Left ventricle myocardium inferior (tissue), 1 donor: ENCODE measurements at regions of chr10 and their contacts with region 1.

Region 1: GRCh38 chr10:48656241-48656913 is 28.3 kb upstream of the WDFY4 start:
- DNase-seq: peak; percentile 94
- H3K4me3 ChIP-seq: peak overlapping the region; percentile 81
- H3K27ac ChIP-seq: peak overlapping the region; percentile 80
- H3K4me1 ChIP-seq: peaks cover 16% of the 10 kb centered on the region
- H3K27me3 ChIP-seq: no peaks in the 10 kb centered on the region
- CTCF ChIP-seq: peak; percentile 96

Region 2: DNA sequence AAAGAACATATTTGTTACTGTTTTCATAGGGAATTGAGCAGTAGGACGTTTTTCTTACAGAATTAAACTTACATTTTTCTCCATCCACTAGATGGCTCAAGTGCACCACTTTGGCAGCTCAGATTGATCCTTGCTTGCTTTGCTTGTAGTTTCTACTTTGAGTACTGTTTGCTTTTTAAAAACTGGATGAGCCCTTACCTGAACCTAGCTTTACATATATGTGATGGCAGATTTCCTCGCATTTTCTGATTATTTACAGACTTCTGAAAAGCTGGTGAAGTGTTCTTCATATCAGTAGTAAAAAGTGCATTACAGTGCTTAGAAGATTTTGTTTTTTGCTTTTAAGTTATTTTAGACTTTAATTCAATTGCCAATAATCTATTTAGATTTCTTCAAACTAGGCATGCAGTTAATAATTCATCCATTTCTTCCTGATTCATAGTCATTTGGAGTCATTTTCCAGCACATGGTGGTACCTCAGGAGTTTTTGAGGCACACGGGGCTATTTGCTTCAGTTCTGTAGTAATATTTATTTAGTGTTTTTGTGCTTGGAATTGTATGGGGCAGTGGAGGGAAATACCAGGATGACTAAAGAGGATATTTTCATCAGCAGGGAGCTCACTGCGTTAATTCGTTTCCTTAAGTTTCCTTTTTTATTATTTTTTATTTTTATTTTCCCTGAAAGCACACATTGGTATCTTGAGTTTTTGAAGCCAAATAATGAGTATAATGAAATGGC is 292.6 kb before region 1 on chr10:
- intact Hi-C with region 1: loop called (anchors 5 kb)
- DNase-seq: no peak
- H3K4me3 ChIP-seq: no peak overlapping the region
- H3K27ac ChIP-seq: peak overlapping the region; percentile 36
- H3K4me1 ChIP-seq: peaks cover 58% of the 10 kb centered on the region
- H3K27me3 ChIP-seq: no peaks in the 10 kb centered on the region
- CTCF ChIP-seq: peak; percentile 82

Region 3: GRCh38 chr10:48551861-48552591 is 104.4 kb before region 1 on chr10:
- intact Hi-C with region 1: loop called (anchors 2 kb)
- DNase-seq: peak; percentile 38
- H3K4me3 ChIP-seq: no peak overlapping the region
- H3K27ac ChIP-seq: no peak overlapping the region
- H3K4me1 ChIP-seq: peaks cover 23% of the 10 kb centered on the region
- H3K27me3 ChIP-seq: no peaks in the 10 kb centered on the region
- CTCF ChIP-seq: peak; percentile 85